ENCODE measurements at regions of chr20 and their contacts with region 1.

Region 1: DNA sequence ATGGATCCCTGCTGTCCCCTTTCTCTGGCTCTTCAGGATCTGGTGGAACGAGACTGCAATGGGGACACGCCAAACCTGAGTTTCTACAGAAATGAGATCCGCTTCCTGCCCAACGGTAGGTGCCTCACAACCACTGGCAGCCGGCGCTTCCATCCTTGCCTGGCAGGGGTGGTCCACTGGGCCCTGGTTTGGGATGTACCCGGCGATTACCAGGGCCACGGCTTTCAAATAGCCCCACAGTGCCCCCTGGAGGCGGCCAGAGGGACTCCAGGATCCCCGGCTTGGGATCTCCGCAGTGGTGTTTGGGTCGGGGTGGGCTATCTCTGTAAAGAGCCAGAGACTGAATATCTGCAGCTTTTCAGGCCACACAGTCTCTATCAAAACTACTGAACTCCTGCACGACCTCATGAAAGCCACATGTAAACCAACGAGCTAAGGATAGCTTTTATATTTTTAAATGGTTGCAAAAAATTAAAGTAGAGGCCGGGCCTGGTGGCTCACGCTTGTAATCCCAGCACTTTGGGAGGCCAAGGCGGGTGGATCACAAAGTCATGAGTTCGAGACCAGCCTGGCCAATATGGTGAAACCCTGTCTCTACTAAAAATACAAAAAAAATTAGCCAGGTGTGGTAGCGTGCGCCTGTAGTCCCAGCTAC is 3.7 kb downstream of the OGFR start:
- DNase-seq: peak in 1 of 2 donors; percentile 94
- H3K4me3 ChIP-seq: no peak overlapping the region
- CTCF ChIP-seq: peak in 1 of 3 donors; percentile 46
- POLR2A ChIP-seq: no peak

Region 2: DNA sequence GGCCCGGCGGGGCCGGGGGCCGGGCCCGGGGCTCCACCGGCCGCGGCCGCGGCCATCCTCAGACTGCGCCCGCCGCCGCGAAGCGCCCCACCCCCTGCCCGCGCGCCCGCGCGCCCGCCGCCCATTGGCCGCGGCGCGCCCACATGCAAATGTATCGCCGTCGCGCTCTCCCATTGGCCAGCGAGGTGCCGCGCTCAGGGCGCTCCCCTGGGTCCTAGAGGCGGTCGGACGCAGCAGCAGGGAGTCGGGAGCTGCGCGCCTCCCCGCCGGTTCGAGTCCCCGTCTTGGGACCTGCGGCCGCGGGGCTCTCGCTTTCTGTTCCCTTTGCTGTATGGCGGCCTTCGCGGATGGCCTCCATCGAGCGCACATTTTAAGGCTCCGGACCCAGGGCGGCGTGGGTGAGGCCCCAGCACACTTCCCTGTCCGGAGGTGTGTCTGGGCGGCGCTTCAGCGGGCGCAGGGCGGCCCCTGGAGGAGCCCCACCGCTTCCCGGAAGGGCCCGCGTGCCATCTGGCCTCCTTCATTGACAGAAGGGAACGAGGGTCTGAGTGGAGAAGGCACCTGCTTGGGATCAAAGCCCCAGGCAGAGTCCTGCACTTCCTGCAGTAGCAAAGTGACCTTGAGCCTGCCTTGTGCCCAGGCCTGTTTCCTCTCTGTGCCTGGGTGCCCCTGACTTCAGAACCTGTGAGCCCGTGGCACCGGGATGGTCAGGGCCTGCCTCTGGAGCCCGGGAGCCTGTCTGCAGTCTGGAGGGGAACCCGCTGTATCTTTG is 400.9 kb before region 1 on chr20 and contains the start of gene CABLES2:
- intact Hi-C with region 1: loop called (anchors 10 kb)
- DNase-seq: peak; percentile 90 to 98
- H3K4me3 ChIP-seq: peak within 1 kb of the TSS; percentile 50
- CTCF ChIP-seq: peak in 1 of 3 donors; percentile 12
- POLR2A ChIP-seq: no peak
- total RNA-seq, gene CABLES2: 2.8 to 5.3 (median 3.7) TPM

Region 3: DNA sequence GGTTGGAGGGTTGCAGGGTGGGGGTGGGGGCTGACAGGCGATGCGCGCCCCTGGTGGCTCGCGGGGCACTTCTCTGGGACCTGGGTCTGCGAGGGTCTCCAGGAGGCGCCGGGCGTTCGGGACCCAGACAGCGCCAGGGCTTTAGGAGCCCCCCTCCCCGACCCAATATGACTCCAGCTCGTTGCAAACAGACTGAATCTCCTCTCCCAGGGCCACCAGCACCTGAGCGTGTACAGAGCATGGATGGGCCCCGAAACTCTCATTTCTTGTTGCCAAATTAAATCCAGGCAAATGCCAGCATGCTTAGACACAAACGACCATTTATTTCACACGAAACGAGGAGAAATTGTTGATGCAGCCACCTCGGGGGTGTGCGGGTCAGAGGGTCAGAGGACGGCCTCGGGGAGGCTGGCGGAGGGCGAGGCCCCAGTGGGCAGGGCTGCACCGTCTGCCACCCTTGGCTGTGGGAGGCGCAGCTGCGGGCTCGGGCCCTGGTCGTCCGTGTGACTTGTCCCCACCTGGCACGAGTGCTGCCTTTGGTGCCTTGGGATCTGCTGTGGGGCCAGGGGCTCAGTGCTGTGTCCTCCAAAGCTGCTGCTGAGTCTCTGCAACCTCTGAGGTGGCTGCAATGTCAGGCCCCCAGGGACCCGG is 311.6 kb before region 1 on chr20:
- intact Hi-C with region 1: loop called (anchors 5 kb)
- DNase-seq: no peak
- H3K4me3 ChIP-seq: no peak overlapping the region
- CTCF ChIP-seq: no peak
- POLR2A ChIP-seq: no peak

Region 4: DNA sequence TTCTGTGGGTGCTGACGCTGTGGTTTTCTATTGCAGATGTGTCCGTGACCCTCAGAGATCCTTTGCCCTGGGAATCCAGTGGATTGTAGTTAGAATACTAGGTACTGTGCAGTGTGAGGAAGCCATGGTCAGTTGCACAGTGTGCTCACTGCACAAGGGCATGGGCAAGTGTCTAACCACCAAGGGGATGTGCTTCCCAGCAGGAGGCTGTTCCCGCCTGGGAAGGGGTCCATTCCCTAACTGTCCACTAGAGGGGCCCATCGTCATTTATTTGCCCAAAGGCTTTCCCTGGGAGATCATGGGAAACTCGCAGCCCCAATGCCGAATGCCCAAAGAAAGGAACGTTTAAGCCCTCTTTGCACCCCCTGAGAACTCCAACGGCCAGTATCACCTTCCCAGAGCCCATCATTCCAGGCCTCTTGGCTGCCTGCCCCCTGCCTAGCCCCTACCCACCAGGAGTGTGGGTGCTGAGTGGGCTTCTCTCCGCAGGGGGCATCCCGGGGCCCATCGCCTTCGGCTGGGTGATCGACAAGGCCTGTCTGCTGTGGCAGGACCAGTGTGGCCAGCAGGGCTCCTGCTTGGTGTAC is 139.8 kb before region 1 on chr20:
- intact Hi-C with region 1: loop called (anchors 5 kb)
- DNase-seq: peak in 1 of 2 donors; percentile 69
- H3K4me3 ChIP-seq: no peak overlapping the region
- CTCF ChIP-seq: peak in 1 of 3 donors; percentile 38
- POLR2A ChIP-seq: no peak

Region 5: GRCh38 chr20:62837800-62838454 is 29.6 kb after region 1 on chr20:
- intact Hi-C with region 1: no loop called
- DNase-seq: peak; percentile 68 to 93
- H3K4me3 ChIP-seq: no peak overlapping the region
- CTCF ChIP-seq: no peak
- POLR2A ChIP-seq: no peak

Region 6: GRCh38 chr20:62900052-62900691 is 91.8 kb after region 1 on chr20:
- intact Hi-C with region 1: no loop called
- DNase-seq: peak; percentile 72 to 95
- H3K4me3 ChIP-seq: no peak overlapping the region
- CTCF ChIP-seq: peak in 1 of 3 donors; percentile 95
- POLR2A ChIP-seq: no peak